Endothelial cell of umbilical vein (primary cell): ENCODE measurements at regions of chr12 and their contacts with region 1.

Region 1: GRCh38 chr12:122356192-122356635 is 66.3 kb downstream of the CLIP1 start:
- DNase-seq: peak; percentile 69
- H3K4me3 ChIP-seq: no peak overlapping the region
- H3K27ac ChIP-seq: no peak overlapping the region
- H3K4me1 ChIP-seq: no peaks in the 10 kb centered on the region
- H3K27me3 ChIP-seq: no peaks in the 10 kb centered on the region
- CTCF ChIP-seq: peak; percentile 67 to 74
- POLR2A ChIP-seq: no peak

Region 2: GRCh38 chr12:122322501-122322900 is 33.7 kb before region 1 on chr12:
- CTCF ChIA-PET with region 1: interaction called, 30 read pairs
- POLR2A ChIA-PET with region 1: no interaction called
- dilution Hi-C with region 1: no loop called
- intact Hi-C with region 1: no loop called
- DNase-seq: peak; percentile 33
- H3K4me3 ChIP-seq: no peak overlapping the region
- H3K27ac ChIP-seq: no peak overlapping the region
- H3K4me1 ChIP-seq: peaks cover 29% of the 10 kb centered on the region
- H3K27me3 ChIP-seq: no peaks in the 10 kb centered on the region
- CTCF ChIP-seq: no peak
- POLR2A ChIP-seq: no peak

Region 3: GRCh38 chr12:122336015-122336946 is 19.9 kb before region 1 on chr12:
- CTCF ChIA-PET with region 1: interaction called, 13 read pairs
- POLR2A ChIA-PET with region 1: no interaction called
- dilution Hi-C with region 1: no loop called
- intact Hi-C with region 1: loop called (anchors 2 kb)
- DNase-seq: peak; percentile 40
- H3K4me3 ChIP-seq: no peak overlapping the region
- H3K27ac ChIP-seq: no peak overlapping the region
- H3K4me1 ChIP-seq: no peaks in the 10 kb centered on the region
- H3K27me3 ChIP-seq: no peaks in the 10 kb centered on the region
- CTCF ChIP-seq: peak; percentile 55 to 71
- POLR2A ChIP-seq: no peak

Region 4: DNA sequence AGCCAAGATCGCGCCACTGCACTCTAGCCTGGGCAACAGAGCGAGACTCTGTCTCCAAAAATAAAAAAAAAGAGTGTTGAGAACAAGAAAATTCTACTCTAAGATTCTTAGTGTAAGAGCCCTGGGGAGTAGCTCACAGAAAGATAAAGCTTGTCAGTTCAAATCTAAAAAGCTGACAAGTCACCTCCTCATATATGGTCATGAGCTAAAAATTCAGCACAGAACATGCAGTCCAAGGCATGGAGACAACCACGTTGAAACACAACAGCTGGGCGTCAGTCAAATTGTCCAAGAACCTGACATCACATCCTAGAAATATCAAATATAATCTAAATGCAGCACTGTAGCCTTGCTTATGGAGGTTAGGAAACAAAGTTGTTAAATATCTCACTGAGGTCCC is 18.5 kb after region 1 on chr12:
- CTCF ChIA-PET with region 1: interaction called, 11 read pairs
- POLR2A ChIA-PET with region 1: no interaction called
- dilution Hi-C with region 1: no loop called
- intact Hi-C with region 1: no loop called
- DNase-seq: no peak
- H3K4me3 ChIP-seq: no peak overlapping the region
- H3K27ac ChIP-seq: no peak overlapping the region
- H3K4me1 ChIP-seq: no peaks in the 10 kb centered on the region
- H3K27me3 ChIP-seq: no peaks in the 10 kb centered on the region
- CTCF ChIP-seq: no peak
- POLR2A ChIP-seq: no peak